PC-9 (cell line): ENCODE measurements at regions of chr9 and their contacts with region 1.

Region 1: DNA sequence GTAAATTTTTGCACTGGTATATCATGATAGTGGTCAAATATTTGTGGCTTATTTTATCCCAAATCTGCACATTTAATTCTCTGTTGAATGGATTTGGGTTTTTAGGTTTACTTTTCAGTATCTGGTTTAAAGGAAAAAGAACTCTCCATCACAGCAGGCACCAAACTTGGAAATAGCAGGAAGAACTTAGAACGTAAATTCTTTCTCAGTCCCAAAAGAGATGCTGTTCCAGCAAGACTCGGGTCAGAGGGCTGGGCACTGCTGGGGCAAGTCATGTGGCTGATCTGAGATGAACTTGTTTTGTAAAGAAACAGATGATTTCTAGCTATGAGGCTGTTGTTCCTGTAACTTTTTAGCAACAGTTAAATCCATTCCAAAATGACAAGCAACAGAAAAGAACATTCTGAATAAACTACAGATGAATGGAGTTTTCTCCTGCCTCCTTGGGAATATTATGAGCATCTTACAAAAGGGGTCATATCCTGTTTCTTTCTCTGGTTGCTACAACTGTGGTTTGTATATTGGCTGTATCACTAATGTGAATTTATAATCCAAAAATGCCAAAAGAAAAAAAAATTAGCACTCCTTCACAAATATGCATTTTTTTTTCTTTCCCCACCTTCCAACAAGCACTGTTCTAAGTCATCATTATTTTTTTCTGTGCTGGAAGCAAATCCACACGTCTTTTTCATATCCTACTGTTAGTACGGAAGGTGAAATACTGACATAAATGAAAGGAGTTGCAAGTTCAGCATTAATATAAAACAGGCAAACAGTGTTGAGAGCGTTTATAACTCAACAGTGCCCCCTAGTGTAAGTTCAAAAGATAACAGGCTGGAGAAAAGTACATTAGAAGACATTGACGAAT is 31.1 kb downstream of the OR2K2 start:
- DNase-seq: peak; percentile 8 to 62
- H3K4me3 ChIP-seq: no peak overlapping the region
- H3K27ac ChIP-seq: no peak overlapping the region
- H3K4me1 ChIP-seq: peaks cover 8% of the 10 kb centered on the region
- H3K27me3 ChIP-seq: no peaks in the 10 kb centered on the region
- CTCF ChIP-seq: peak; percentile 93

Region 2: DNA sequence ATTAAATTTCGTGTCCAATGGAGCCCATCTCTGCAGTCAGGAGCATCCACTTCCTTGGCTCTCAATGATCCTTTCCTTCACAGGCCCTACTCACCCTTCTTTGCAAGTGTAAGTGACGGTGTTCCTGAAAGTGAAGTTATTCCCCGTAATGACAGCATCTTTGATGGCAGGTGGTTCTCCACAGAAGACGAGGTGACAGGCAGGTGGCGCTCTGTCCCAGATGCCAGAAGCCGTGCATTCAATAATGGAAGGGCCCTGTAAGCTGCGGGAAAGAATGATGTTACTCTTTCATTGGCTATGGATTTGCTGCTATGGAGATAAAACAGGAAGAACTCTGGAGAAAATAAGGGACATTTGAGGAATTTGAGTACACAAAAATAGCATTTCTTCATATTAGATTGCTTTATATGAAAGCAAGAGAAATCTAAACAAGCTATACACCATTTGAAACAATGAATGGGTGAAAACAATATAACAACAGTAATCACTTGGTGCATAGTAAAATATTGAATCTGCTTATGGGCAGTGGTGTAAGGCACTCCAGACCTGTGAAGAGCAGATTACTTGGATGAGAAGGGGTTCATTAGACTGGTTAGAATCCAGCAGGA is 871.4 kb before region 1 on chr9:
- CTCF ChIA-PET with region 1: no interaction called
- POLR2A ChIA-PET with region 1: no interaction called
- intact Hi-C with region 1: loop called (anchors 5 kb)
- DNase-seq: peak in 1 of 2 experiments; percentile 43
- H3K4me3 ChIP-seq: no peak overlapping the region
- H3K27ac ChIP-seq: no peak overlapping the region
- H3K4me1 ChIP-seq: no peaks in the 10 kb centered on the region
- H3K27me3 ChIP-seq: no peaks in the 10 kb centered on the region
- CTCF ChIP-seq: peak; percentile 56

Region 3: GRCh38 chr9:110744753-110745384 is 554.1 kb before region 1 on chr9:
- CTCF ChIA-PET with region 1: no interaction called
- POLR2A ChIA-PET with region 1: no interaction called
- intact Hi-C with region 1: loop called (anchors 2 kb)
- DNase-seq: peak; percentile 72 to 97
- H3K4me3 ChIP-seq: peak overlapping the region; percentile 2; the same call in 1 of the 2 replicates
- H3K27ac ChIP-seq: peak overlapping the region; percentile 87
- H3K4me1 ChIP-seq: peaks cover 48% of the 10 kb centered on the region
- H3K27me3 ChIP-seq: no peaks in the 10 kb centered on the region
- CTCF ChIP-seq: no peak

Region 4: DNA sequence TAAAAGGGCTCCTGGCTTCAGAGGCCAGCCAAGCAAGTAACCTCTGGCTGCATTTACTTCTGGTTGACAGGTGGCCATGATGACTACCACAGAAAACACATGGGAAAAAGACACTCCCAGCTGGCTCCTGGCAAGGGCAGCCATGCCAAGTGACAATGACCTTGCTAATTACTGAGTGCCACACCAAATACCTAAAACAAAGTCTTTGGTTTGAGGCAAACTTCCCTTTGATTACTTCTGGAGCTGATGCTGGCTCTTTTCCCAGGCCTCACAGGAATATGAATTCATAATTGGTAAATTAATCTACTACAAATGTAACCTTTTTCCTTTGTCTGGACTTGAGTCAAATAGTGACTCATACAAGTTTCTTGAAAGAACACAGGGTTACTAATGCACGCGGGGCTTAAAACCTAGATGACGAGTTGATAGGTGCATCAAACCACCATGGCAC is 321.7 kb before region 1 on chr9:
- CTCF ChIA-PET with region 1: no interaction called
- POLR2A ChIA-PET with region 1: no interaction called
- intact Hi-C with region 1: loop called (anchors 10 kb)
- DNase-seq: peak; percentile 67 to 84
- H3K4me3 ChIP-seq: no peak overlapping the region
- H3K27ac ChIP-seq: peak overlapping the region; percentile 58
- H3K4me1 ChIP-seq: peaks cover 11% of the 10 kb centered on the region
- H3K27me3 ChIP-seq: no peaks in the 10 kb centered on the region
- CTCF ChIP-seq: no peak

Region 5: DNA sequence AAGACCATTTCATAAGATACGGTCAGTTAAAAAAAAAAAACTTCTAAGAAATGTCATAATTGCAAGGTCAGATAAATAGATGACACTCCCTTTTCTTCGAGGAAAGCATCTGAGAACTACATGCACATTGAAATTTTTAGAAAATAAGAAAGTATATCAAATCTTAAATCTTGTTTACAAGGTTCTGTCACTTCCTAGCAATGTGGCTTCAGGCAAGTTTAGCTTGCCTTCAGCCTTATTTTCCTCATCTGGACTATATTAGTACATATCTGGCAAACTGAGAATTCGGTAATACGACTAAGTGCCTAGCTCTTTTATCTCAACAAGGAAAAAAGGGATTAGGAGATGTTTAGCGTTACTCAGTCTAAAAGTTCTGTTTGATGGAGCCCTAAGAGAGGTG is 63.6 kb after region 1 on chr9:
- CTCF ChIA-PET with region 1: no interaction called
- POLR2A ChIA-PET with region 1: no interaction called
- intact Hi-C with region 1: no loop called
- DNase-seq: no peak
- H3K4me3 ChIP-seq: no peak overlapping the region
- H3K27ac ChIP-seq: no peak overlapping the region
- H3K4me1 ChIP-seq: no peaks in the 10 kb centered on the region
- H3K27me3 ChIP-seq: no peaks in the 10 kb centered on the region
- CTCF ChIP-seq: no peak

Region 6: GRCh38 chr9:111375817-111376564 is 77.0 kb after region 1 on chr9:
- CTCF ChIA-PET with region 1: no interaction called
- POLR2A ChIA-PET with region 1: interaction called, 14 read pairs
- intact Hi-C with region 1: no loop called
- DNase-seq: peak in 1 of 2 experiments; percentile 69
- H3K4me3 ChIP-seq: no peak overlapping the region
- H3K27ac ChIP-seq: peak overlapping the region; percentile 33
- H3K4me1 ChIP-seq: peaks cover 10% of the 10 kb centered on the region
- H3K27me3 ChIP-seq: no peaks in the 10 kb centered on the region
- CTCF ChIP-seq: no peak